Psoas muscle (tissue), 8 donors: ENCODE measurements at regions of chr12 and their contacts with region 1.

Region 1: DNA sequence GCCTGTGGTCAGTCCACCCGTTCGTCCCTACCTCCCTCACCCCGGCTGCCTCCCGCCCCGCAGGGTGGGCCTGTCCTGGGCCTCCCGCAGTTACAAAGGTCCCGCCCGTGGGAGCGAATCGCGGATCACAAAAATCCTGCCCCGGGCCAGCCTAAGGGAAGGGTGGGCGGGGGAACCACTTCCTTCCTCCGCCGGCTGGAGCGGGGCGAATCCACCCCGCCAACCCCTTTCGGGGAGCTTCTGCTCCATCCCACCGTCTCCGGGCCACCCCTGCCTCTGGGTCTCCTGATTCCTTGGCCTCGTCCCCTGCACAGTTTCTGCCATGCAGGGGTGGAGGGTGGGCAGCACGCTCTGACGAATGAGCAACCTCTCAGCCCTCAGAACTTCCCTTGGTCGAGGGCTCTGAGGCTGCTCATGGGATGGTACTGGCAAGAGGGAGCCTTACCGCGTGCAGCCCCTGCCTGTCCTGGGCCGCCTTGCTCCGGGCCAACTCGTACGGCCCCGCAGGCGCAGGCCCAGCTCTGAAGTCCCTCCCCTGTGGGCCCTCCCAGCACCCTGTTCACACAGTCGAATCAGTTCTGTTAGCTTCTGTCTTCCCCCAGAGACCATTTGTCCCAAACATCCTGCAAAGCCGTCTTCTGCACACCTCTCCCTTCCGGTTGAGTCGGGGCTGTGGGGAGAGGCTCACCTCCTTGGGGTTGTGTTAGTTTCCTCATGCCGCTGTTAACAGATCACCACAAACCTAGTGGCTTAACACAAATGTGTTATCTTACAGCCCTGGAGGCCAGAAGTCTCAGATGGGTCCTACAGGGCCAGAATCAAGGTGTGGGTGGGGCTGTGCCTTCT is 589 bp upstream of the HVCN1 start:
- DNase-seq: peak; percentile 66 to 71
- ATAC-seq: peak; percentile 58 to 76 (median 60)
- H3K4me3 ChIP-seq: peak overlapping the region; percentile 75
- H3K27ac ChIP-seq: peak overlapping the region; percentile 25
- H3K4me1 ChIP-seq: no peaks in the 10 kb centered on the region
- H3K27me3 ChIP-seq: peaks cover 0 to 20% (median 7%) of the 10 kb centered on the region in 3 donors
- CTCF ChIP-seq: no peak

Region 2: DNA sequence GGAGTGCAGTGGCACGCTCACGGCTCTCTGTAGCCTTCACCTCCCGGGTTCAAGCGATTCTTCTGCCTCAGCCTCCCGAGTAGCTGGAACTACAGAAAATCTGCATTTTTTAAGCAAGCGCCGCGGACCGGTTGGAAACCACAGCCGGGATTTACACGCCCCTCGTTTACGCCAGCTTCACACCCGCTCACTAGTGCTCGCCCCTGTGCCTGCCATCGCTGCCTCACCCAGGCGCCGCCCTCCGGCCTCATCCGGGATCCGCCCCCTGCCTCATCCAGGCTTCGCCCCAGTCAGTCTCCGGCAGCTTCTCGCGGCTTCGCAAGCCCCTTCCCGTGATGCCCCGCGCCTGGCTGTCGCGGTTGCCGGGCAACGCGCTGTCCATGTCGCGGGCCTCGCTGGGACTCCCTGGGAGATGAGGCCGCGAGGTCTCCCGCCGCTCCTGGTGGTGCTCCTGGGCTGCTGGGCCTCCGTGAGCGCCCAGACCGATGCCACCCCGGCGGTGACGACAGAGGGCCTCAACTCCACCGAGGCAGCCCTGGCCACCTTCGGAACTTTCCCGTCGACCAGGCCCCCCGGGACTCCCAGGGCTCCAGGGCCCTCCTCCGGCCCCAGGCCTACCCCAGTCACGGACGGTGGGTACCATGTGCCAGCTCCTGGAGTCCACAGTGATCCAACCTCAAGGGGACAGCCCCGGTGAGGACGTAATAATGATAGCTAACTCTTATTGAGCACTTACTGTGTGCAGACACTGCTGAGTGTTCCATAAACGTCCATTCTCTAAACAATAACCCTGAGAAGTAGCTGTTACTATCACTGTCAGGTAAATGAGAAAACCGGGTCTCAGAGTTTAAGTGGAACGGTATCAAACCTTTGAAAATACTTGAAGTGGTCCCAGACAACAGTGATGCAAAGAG is 75.5 kb before region 1 on chr12 and contains the start of gene TCTN1:
- intact Hi-C with region 1: loop called in 1 of 2 experiments (anchors 5 kb)
- DNase-seq: peak; percentile 98
- ATAC-seq: peak; percentile 99
- H3K4me3 ChIP-seq: peak within 1 kb of the TSS; percentile 80
- H3K27ac ChIP-seq: peak within 1 kb of the TSS; percentile 56
- H3K4me1 ChIP-seq: peaks cover 7% of the 10 kb centered on the region
- H3K27me3 ChIP-seq: no peaks in the 10 kb centered on the region
- CTCF ChIP-seq: no peak
- total RNA-seq, gene TCTN1: 8.6 to 23.5 (median 12.7) TPM

Region 3: GRCh38 chr12:110647631-110648040 is 41.9 kb before region 1 on chr12:
- intact Hi-C with region 1: loop called in 1 of 2 experiments (anchors 5 kb)
- DNase-seq: no peak
- ATAC-seq: no peak
- H3K4me3 ChIP-seq: no peak overlapping the region
- H3K27ac ChIP-seq: no peak overlapping the region
- H3K4me1 ChIP-seq: no peaks in the 10 kb centered on the region
- H3K27me3 ChIP-seq: no peaks in the 10 kb centered on the region
- CTCF ChIP-seq: no peak